K562 (cell line): ENCODE measurements at regions of chr7 and their contacts with region 1.

Region 1: GRCh38 chr7:139340037-139340807 is 915 bp upstream of the FMC1 start:
- DNase-seq: peak; percentile 96 to 100 (median 96)
- ATAC-seq: peak; percentile 83
- H3K4me3 ChIP-seq: peak overlapping the region; percentile 81
- H3K27ac ChIP-seq: peak overlapping the region; percentile 99
- H3K4me1 ChIP-seq: peaks cover 4% of the 10 kb centered on the region in 2 experiments; a peak in 2 of 5 replicates
- H3K27me3 ChIP-seq: no peaks in the 10 kb centered on the region
- CTCF ChIP-seq: peak; percentile 93 to 95 (median 93)
- EP300 ChIP-seq: peak; percentile 81
- POLR2A ChIP-seq: peak; percentile 89
- RAD21 ChIP-seq: peak; percentile 27 to 50; a peak in 3 of 4 replicates

Region 2: GRCh38 chr7:139095194-139095659 is 245.0 kb before region 1 on chr7:
- CTCF ChIA-PET with region 1: no interaction called
- POLR2A ChIA-PET with region 1: interaction called, 10 read pairs
- in situ Hi-C with region 1: no loop called
- intact Hi-C with region 1: no loop called
- DNase-seq: peak in 3 of 4 experiments; percentile 16 to 74 (median 64)
- ATAC-seq: peak; percentile 53
- H3K4me3 ChIP-seq: no peak overlapping the region
- H3K27ac ChIP-seq: peak overlapping the region; percentile 30; the same call in 2 of the 3 replicates
- H3K4me1 ChIP-seq: peaks cover 30 to 41% of the 10 kb centered on the region in 2 experiments
- H3K27me3 ChIP-seq: no peaks in the 10 kb centered on the region
- CTCF ChIP-seq: peak in 1 of 3 experiments; percentile 13; a peak in 1 of 6 replicates
- EP300 ChIP-seq: peak; percentile 12; the same call in 1 of the 2 replicates
- POLR2A ChIP-seq: no peak
- RAD21 ChIP-seq: peak in 1 of 2 experiments; percentile 7; a peak in 1 of 4 replicates

Region 3: DNA sequence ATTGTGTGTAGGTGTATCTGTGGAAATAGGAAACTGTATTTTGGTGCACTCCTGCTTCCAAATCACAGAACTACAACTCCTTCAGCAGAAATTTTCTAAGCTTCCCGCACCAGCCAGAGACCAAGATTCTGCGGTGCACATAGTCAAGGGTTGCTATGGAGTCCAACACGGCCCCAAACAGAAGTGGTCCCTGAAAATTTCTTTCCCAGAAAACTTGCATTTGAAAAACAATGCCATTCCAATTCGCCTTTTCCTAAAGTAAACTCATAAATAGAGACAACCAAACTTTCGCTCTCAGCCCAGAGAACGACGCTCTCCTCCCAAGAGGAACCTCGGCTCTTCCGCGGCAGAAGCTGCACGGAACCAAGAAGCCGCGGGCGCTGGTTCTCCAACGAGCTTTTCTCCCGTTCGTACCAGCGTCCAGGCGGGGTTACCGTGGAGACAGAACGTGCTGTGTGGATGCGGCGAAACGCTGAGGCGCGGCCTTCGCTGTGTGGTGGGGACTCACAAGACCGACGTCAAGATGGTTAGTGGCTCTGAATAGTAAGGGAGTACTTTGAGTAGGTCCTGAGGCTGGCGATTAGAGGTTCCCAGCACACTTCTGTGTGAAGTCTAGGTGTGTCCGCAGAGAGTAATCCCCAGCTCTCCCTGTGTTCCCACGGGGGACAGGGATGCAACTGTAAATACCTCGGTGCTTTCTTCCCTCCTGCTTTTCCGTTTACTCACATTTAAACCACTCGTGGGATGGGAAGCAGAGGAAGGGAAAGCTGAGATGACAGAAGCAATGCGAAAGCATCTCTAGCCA is 206.7 kb before region 1 on chr7:
- CTCF ChIA-PET with region 1: no interaction called
- POLR2A ChIA-PET with region 1: interaction called, 5 read pairs
- in situ Hi-C with region 1: no loop called
- intact Hi-C with region 1: loop called (anchors 10 kb)
- DNase-seq: peak; percentile 75 to 97 (median 84)
- ATAC-seq: peak; percentile 99
- H3K4me3 ChIP-seq: peak overlapping the region; percentile 40
- H3K27ac ChIP-seq: peak overlapping the region; percentile 9; the same call in 2 of the 3 replicates
- H3K4me1 ChIP-seq: no peaks in the 10 kb centered on the region; a peak in 1 of 5 replicates
- H3K27me3 ChIP-seq: no peaks in the 10 kb centered on the region
- CTCF ChIP-seq: 0 out of 6 replicates have a peak, but pooled peaks of 1 of the 3 experiments have one; percentile 9
- EP300 ChIP-seq: peak; percentile 58
- POLR2A ChIP-seq: peak; percentile 82
- RAD21 ChIP-seq: peak; percentile 46 to 54; a peak in 3 of 4 replicates

Region 4: DNA sequence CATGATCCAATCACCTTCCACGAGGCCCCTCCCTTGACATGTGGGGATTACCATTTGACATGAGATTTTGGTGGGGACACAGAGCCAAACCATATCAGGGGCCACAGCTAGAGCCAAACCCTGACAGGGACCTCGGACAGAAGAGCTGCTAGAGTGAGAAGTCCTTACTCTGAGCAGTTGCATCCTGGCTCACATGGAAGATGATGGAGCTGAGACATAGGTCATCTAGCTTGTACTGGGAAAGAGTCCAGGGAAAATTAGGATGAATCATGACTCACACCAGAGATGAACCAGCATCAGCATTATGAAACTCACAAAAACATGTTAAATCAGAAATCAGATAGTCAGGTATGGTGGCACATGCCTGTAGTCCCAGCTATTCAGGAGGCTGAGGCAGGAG is 11.8 kb before region 1 on chr7:
- CTCF ChIA-PET with region 1: no interaction called
- POLR2A ChIA-PET with region 1: interaction called, 11 read pairs
- in situ Hi-C with region 1: no loop called
- intact Hi-C with region 1: no loop called
- DNase-seq: no peak
- ATAC-seq: no peak; the same call in 2 of the 3 replicates
- H3K4me3 ChIP-seq: no peak overlapping the region
- H3K27ac ChIP-seq: no peak overlapping the region
- H3K4me1 ChIP-seq: peaks cover 0 to 5% of the 10 kb centered on the region in 2 experiments; a peak in 3 of 5 replicates
- H3K27me3 ChIP-seq: no peaks in the 10 kb centered on the region; a peak in 1 of 5 replicates
- CTCF ChIP-seq: no peak
- EP300 ChIP-seq: no peak
- POLR2A ChIP-seq: no peak
- RAD21 ChIP-seq: no peak

Region 5: DNA sequence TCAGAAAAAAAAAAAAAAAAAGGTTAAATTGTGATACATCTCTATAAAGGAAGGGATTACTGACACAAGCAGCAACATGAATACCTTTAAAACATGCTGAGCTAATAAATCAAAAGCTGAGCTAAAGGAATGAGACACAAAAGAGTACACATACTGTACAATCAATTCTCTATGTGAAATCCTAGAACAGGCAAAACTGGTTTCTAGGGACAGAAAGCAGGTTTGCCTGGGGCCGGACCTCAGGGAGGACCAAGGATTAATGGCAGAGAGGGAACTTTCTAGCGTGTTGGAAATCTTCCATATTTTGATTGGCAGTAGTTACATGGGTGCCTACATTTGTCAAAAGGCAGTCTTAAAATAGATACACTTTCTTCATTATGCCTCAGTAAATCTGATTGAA is 90.8 kb after region 1 on chr7:
- CTCF ChIA-PET with region 1: no interaction called
- POLR2A ChIA-PET with region 1: interaction called, 4 read pairs
- in situ Hi-C with region 1: no loop called
- intact Hi-C with region 1: loop called (anchors 5 kb)
- DNase-seq: no peak
- ATAC-seq: no peak
- H3K4me3 ChIP-seq: no peak overlapping the region
- H3K27ac ChIP-seq: no peak overlapping the region
- H3K4me1 ChIP-seq: peaks cover 4 to 5% of the 10 kb centered on the region in 2 experiments; a peak in 3 of 5 replicates
- H3K27me3 ChIP-seq: no peaks in the 10 kb centered on the region
- CTCF ChIP-seq: no peak
- EP300 ChIP-seq: no peak
- POLR2A ChIP-seq: no peak
- RAD21 ChIP-seq: no peak

Region 6: GRCh38 chr7:139523199-139523941 is 183.1 kb after region 1 on chr7 and contains the start of gene CLEC2L:
- CTCF ChIA-PET with region 1: no interaction called
- POLR2A ChIA-PET with region 1: no interaction called
- in situ Hi-C with region 1: no loop called
- intact Hi-C with region 1: no loop called
- DNase-seq: peak in 3 of 4 experiments; percentile 35 to 77 (median 73)
- ATAC-seq: peak; percentile 69
- H3K4me3 ChIP-seq: no peak within 1 kb of the TSS
- H3K27ac ChIP-seq: no peak within 1 kb of the TSS
- H3K4me1 ChIP-seq: peaks cover 0 to 15% of the 10 kb centered on the region in 2 experiments; a peak in 2 of 5 replicates
- H3K27me3 ChIP-seq: peaks cover 43 to 61% of the 10 kb centered on the region in 2 experiments
- CTCF ChIP-seq: no peak
- EP300 ChIP-seq: no peak
- POLR2A ChIP-seq: no peak
- RAD21 ChIP-seq: no peak
- polyA plus RNA-seq, gene CLEC2L: 0.94 to 2.1 TPM